ENCODE measurements at regions of chr15 and their contacts with region 1.

Region 1: DNA sequence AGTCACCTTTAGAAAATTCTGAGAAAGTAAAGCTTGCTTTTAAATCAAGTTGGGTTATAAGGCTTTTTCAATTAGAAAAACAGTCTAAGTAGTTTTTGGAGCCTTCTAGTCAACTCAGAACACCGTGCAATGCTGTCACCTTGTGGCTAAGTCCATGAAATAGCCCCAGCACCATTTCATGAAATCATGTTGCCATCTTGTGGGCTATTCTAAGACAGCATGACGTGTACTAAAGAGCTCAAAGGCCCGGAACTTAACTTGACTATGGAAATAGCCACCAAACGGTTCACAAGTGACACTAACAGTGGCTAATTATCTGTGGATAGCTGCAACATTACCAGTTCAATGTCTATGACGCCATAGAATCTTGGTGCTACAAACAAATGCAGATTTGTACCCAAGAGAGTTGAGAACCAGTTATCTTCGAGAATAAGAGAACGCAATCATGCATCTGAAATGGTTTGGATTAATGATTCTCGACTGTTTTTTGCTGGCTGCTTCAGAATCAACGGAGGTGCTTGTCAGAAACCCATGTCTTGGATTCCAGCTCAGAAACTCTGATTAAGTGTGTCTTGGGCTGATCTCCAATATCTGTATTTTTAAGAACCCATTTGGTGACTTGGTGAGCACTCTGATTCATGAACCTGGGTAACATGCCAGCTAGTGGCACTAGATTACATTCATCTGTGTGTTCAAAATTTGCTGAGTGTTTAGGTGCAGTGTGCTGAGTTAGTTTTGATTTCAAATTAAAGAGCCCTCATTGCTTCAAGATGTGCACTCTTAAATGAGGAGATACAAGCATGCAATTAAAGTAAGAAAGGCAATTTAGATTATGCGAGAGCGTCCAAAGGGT is 111.2 kb upstream of the MCTP2 start:
- DNase-seq: peak; percentile 9 to 69 (median 30)
- H3K4me3 ChIP-seq: no peak overlapping the region
- H3K4me3 Mint-ChIP-seq: no peak overlapping the region
- H3K27ac ChIP-seq: no peak overlapping the region
- H3K27ac Mint-ChIP-seq: peak overlapping the region in 1 of 8 donors; percentile 15
- H3K4me1 ChIP-seq: no peaks in the 10 kb centered on the region
- H3K4me1 Mint-ChIP-seq: no peaks in the 10 kb centered on the region
- H3K27me3 ChIP-seq: no peaks in the 10 kb centered on the region
- H3K27me3 Mint-ChIP-seq: peaks cover 0 to 2% of the 10 kb centered on the region in 2 donors

Region 2: GRCh38 chr15:93030430-93031105 is 1089.6 kb before region 1 on chr15:
- CTCF ChIA-PET with region 1: interaction called, 14 read pairs
- POLR2A ChIA-PET with region 1: no interaction called
- DNase-seq: peak; percentile 51 to 73 (median 54)
- H3K4me3 ChIP-seq: no peak overlapping the region
- H3K4me3 Mint-ChIP-seq: peak overlapping the region in 1 of 7 donors; percentile 5
- H3K27ac ChIP-seq: no peak overlapping the region
- H3K27ac Mint-ChIP-seq: peak overlapping the region; percentile 12 to 86 (median 70)
- H3K4me1 ChIP-seq: peaks cover 8% of the 10 kb centered on the region
- H3K4me1 Mint-ChIP-seq: peaks cover 18 to 40% (median 39%) of the 10 kb centered on the region in 3 donors
- H3K27me3 ChIP-seq: no peaks in the 10 kb centered on the region
- H3K27me3 Mint-ChIP-seq: peaks cover 0 to 4% of the 10 kb centered on the region in 2 donors

Region 3: GRCh38 chr15:93587059-93587521 is 533.1 kb before region 1 on chr15:
- CTCF ChIA-PET with region 1: no interaction called
- POLR2A ChIA-PET with region 1: no interaction called
- DNase-seq: no peak
- H3K4me3 ChIP-seq: no peak overlapping the region
- H3K4me3 Mint-ChIP-seq: no peak overlapping the region
- H3K27ac ChIP-seq: no peak overlapping the region
- H3K27ac Mint-ChIP-seq: no peak overlapping the region
- H3K4me1 ChIP-seq: no peaks in the 10 kb centered on the region
- H3K4me1 Mint-ChIP-seq: no peaks in the 10 kb centered on the region
- H3K27me3 ChIP-seq: no peaks in the 10 kb centered on the region
- H3K27me3 Mint-ChIP-seq: peaks cover 23 to 26% of the 10 kb centered on the region in 2 donors

Measured in CD8-positive, alpha-beta memory T cell (primary cell).